Heart left ventricle (tissue), 16 donors: ENCODE measurements at regions of chr10 and their contacts with region 1.

Region 1: DNA sequence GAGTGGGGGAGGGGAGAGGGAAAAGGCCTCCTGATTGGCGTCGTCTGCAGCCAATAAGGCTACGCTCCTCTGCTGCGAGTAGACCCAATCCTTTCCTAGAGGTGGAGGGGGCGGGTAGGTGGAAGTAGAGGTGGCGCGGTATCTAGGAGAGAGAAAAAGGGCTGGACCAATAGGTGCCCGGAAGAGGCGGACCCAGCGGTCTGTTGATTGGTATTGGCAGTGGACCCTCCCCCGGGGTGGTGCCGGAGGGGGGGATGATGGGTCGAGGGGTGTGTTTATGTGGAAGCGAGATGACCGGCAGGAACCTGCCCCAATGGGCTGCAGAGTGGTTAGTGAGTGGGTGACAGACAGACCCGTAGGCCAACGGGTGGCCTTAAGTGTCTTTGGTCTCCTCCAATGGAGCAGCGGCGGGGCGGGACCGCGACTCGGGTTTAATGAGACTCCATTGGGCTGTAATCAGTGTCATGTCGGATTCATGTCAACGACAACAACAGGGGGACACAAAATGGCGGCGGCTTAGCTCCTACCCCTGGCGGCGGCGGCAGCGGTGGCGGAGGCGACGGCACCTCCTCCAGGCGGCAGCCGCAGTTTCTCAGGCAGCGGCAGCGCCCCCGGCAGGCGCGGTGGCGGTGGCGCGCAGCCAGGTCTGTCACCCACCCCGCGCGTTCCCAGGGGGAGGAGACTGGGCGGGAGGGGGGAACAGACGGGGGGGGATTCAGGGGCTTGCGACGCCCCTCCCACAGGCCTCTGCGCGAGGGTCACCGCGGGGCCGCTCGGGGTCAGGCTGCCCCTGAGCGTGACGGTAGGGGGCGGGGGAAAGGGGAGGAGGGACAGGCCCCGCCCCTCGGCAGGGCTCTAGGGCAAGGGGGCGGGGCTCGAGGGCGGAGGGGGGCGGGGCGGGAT is at the start of gene KAT6B:
- DNase-seq: peak; percentile 100
- ATAC-seq: peak; percentile 90 to 97 (median 95)
- H3K4me3 ChIP-seq: peak within 1 kb of the TSS; percentile 67 to 99 (median 92)
- H3K27ac ChIP-seq: peak within 1 kb of the TSS; percentile 93 to 100 (median 99)
- H3K4me1 ChIP-seq: peaks cover 0 to 55% (median 33%) of the 10 kb centered on the region in 12 donors
- H3K27me3 ChIP-seq: no peaks in the 10 kb centered on the region
- CTCF ChIP-seq: peak in 5 of 12 donors; percentile 11 to 44 (median 25)
- POLR2A ChIP-seq: peak in 1 of 2 donors; percentile 71
- total RNA-seq, gene KAT6B: 36.8 to 61.3 (median 46.9) TPM

Region 2: DNA sequence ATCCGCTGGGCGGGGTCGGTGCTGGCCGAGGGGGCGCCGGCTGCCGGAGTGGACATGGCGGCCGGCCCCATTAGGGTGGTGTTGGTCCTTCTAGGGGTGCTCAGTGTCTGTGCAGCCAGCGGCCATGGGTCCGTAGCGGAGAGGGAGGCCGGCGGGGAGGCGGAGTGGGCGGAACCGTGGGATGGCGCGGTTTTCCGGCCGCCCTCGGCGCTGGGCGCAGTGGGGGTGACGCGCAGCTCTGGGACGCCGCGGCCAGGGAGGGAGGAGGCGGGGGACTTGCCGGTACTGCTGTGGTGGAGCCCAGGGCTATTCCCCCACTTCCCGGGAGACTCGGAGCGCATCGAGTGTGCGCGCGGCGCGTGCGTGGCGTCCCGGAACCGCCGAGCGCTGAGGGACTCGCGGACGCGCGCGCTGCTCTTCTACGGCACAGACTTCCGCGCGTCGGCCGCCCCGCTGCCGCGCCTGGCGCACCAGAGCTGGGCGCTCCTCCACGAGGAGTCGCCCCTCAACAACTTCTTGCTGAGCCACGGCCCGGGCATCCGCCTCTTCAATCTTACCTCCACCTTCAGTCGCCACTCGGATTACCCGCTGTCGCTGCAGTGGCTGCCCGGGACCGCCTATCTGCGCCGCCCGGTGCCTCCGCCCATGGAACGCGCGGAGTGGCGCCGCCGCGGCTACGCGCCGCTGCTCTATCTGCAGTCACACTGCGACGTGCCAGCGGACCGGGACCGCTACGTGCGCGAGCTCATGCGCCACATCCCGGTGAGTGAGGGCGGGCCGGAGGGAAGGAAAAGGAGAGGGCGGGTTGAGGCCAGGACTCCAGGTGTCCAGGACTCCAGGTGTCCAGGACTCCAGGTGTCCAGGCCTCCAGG is 1053.9 kb before region 1 on chr10:
- intact Hi-C with region 1: loop called in 1 of 10 experiments (anchors 10 kb)
- DNase-seq: peak; percentile 82 to 90 (median 87)
- ATAC-seq: peak; percentile 61 to 87 (median 85)
- H3K4me3 ChIP-seq: peak overlapping the region; percentile 46 to 95 (median 83)
- H3K27ac ChIP-seq: peak overlapping the region; percentile 93 to 100 (median 98)
- H3K4me1 ChIP-seq: peaks cover 7 to 52% (median 31%) of the 10 kb centered on the region in 12 donors
- H3K27me3 ChIP-seq: no peaks in the 10 kb centered on the region
- CTCF ChIP-seq: peak in 5 of 12 donors; percentile 16 to 43 (median 31)
- POLR2A ChIP-seq: peak; percentile 51 to 93

Region 3: DNA sequence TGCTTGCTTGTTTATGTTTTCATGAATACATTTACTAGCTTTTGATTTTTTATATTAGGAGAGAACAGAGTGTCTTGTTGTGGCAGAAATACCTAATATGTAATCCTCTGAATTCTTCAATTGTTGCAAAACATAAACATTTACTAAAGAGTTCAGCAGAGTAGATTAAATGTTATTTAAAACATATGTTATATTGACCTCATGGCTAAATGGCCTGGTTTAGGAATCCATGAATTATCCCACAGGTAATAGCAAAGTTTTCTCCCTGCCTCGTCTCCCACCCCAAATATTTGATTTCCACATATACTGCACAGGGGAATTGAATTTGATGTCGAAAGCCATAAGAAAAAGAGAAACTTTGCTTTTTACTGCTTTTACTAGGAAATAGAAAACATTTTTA is 563.5 kb before region 1 on chr10:
- intact Hi-C with region 1: loop called in 4 of 10 experiments (anchors 5 to 10 kb)
- DNase-seq: no peak
- ATAC-seq: no peak
- H3K4me3 ChIP-seq: no peak overlapping the region
- H3K27ac ChIP-seq: no peak overlapping the region
- H3K4me1 ChIP-seq: peaks cover 0 to 4% (median 0%) of the 10 kb centered on the region in 12 donors
- H3K27me3 ChIP-seq: no peaks in the 10 kb centered on the region
- CTCF ChIP-seq: no peak
- POLR2A ChIP-seq: no peak

Region 4: DNA sequence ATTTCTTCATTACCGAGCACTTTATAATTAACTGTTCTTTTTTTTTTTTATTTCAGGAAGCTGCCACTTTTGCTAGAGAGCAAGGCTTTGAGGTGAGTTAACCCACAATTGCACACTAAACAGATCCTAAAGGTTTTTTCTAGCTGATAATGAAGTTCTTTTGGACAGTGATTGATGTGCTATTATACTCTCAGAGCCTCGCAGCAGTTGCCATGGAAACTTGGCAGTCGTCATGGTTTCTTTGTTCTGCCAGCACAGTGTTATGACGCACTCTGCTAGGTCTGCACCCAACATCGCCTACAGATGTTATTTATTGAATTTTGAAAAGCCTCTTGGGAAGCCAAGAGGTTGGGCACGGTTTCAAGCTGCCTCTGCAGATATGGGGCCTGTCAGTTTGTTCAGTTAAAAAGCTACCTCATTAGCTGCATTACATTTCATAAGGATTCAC is 237.1 kb before region 1 on chr10:
- intact Hi-C with region 1: loop called in 7 of 10 experiments (anchors 2 to 10 kb)
- DNase-seq: peak; percentile 85 to 95 (median 94)
- ATAC-seq: peak; percentile 89 to 96 (median 94)
- H3K4me3 ChIP-seq: no peak overlapping the region
- H3K27ac ChIP-seq: peak overlapping the region; percentile 38 to 78 (median 64)
- H3K4me1 ChIP-seq: peaks cover 8 to 83% (median 56%) of the 10 kb centered on the region in 12 donors
- H3K27me3 ChIP-seq: no peaks in the 10 kb centered on the region
- CTCF ChIP-seq: no peak
- POLR2A ChIP-seq: no peak

Region 5: DNA sequence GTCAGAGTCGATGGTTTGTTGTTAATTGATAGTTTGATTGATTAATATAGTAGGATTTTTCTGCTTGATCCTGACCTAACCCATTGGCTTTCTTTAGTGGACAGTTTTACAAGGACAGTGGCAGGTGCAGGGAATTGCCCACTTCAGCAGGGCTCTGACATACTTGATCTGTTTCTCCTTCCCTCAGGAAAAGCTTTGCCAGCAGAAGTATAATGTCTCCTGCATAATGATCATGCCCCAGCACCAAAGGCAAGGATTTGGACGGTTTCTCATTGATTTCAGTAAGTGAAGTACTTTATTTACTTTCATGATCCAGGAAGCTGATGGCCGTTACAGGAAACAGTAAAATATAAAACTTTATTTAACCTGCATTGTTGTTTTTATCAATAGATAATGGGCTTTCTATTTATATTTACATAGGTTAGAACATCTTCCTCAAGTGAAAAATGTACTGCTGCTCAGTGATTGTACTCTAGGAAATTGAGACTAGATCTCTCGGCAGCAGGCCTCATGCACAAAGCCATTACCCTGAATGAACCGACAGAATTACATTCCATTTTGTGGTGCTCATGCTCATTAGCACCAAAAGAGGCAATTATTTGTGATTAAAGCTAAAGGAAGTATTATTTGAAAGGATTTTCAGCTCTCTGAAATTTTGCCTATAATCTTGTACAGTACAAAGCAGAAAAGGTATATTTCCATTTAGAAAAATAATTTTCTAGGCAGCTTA is 162.6 kb after region 1 on chr10:
- intact Hi-C with region 1: loop called in 1 of 10 experiments (anchors 10 kb)
- DNase-seq: no peak
- ATAC-seq: no peak
- H3K4me3 ChIP-seq: no peak overlapping the region
- H3K27ac ChIP-seq: peak overlapping the region in 2 of 12 donors; percentile 22 to 27
- H3K4me1 ChIP-seq: peaks cover 0 to 34% (median 16%) of the 10 kb centered on the region in 12 donors
- H3K27me3 ChIP-seq: no peaks in the 10 kb centered on the region
- CTCF ChIP-seq: no peak
- POLR2A ChIP-seq: no peak

Region 6: DNA sequence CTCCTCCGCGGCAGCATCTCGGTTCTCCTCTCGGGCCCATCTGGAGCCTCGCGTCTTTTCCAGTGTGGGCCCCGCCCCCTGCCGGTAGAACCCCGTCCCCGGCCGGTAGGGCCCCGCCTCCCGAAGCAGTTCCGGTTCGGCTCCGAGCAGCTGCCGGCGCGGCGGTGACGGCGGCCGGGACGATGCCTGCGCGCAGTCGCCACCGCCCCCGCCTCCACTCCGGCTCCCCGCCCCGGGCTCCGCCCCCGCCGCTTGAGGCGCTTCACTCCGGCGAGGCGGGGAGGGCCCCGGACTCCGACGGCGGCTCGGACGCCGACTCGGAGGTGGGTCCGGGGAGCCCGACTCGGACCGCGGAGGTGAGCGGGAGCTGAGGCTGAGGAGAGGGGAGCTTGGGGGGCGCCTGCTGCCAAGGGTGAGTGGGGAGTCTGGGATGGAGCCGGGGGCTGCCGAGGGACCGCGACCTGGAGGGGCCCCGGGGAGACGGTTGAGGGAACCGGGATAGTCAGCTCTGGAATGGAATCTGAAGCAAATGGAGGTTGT is 285.0 kb after region 1 on chr10 and contains the start of gene SAMD8:
- intact Hi-C with region 1: loop called in 7 of 10 experiments (anchors 5 to 10 kb)
- DNase-seq: peak; percentile 95 to 98 (median 98)
- ATAC-seq: peak; percentile 62 to 90 (median 89)
- H3K4me3 ChIP-seq: peak within 1 kb of the TSS; percentile 62 to 96 (median 82)
- H3K27ac ChIP-seq: peak within 1 kb of the TSS; percentile 87 to 98 (median 96)
- H3K4me1 ChIP-seq: peaks cover 0 to 62% (median 34%) of the 10 kb centered on the region in 12 donors
- H3K27me3 ChIP-seq: no peaks in the 10 kb centered on the region
- CTCF ChIP-seq: peak; percentile 20 to 64 (median 50)
- POLR2A ChIP-seq: peak; percentile 75 to 94
- total RNA-seq, gene SAMD8: 19.4 to 43.0 (median 25.1) TPM